Gastrocnemius medialis (tissue), 4 donors: ENCODE measurements at regions of chr17 and their contacts with region 1.

Region 1: GRCh38 chr17:2853111-2853721 is 57.0 kb downstream of the RAP1GAP2 start:
- DNase-seq: peak in 1 of 2 donors; percentile 24
- ATAC-seq: peak; percentile 40 to 52
- H3K4me3 ChIP-seq: peak overlapping the region; percentile 54 to 71 (median 60)
- H3K27ac ChIP-seq: peak overlapping the region in 3 of 4 donors; percentile 58 to 63 (median 59)
- H3K4me1 ChIP-seq: peaks cover 8 to 13% of the 10 kb centered on the region in 2 donors
- H3K27me3 ChIP-seq: peaks cover 11 to 36% (median 34%) of the 10 kb centered on the region in 3 donors
- CTCF ChIP-seq: no peak
- POLR2A ChIP-seq: no peak

Region 2: DNA sequence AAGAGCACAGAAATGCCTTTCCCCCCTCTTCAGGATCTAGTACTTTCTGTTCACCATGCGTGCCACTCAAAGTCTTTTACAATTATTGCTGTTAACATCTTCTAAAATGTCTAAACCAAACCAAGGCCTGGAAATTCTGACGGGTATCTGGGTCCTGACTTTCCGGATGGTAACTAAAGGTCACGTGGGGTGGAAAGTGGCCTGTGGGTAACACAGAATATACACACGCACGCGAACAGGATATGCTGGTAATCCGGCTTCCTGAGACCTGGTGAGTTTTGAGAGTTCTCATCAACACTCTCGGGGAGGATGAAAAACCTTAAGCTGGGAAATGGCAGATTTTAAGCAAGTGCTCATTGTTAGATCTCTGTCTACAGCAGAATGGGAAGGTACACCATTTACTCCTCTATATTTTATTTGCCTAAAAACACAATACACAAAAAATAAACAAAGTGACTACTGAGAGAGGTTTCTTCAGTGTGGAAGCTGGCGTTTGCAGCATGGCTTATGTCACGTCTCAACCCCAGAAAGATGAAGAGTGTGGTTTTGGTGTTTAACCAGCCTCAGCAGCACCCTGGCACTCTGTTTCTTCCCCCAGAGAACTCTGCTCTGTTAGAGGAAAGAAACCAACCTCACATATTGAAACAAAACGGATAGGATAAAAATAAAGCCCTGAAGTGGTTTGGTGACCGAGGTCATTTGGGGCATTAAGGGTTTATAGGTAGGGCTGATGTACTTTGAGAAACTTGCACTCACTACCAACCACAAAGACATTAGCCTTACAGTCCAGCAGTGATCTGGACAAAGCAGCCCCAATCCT is 587.0 kb before region 1 on chr17:
- in situ Hi-C with region 1: no loop called
- intact Hi-C with region 1: no loop called
- DNase-seq: no peak
- ATAC-seq: no peak
- H3K4me3 ChIP-seq: no peak overlapping the region
- H3K27ac ChIP-seq: no peak overlapping the region
- H3K4me1 ChIP-seq: peaks cover 10 to 22% of the 10 kb centered on the region in 2 donors
- H3K27me3 ChIP-seq: no peaks in the 10 kb centered on the region
- CTCF ChIP-seq: no peak
- POLR2A ChIP-seq: no peak

Region 3: DNA sequence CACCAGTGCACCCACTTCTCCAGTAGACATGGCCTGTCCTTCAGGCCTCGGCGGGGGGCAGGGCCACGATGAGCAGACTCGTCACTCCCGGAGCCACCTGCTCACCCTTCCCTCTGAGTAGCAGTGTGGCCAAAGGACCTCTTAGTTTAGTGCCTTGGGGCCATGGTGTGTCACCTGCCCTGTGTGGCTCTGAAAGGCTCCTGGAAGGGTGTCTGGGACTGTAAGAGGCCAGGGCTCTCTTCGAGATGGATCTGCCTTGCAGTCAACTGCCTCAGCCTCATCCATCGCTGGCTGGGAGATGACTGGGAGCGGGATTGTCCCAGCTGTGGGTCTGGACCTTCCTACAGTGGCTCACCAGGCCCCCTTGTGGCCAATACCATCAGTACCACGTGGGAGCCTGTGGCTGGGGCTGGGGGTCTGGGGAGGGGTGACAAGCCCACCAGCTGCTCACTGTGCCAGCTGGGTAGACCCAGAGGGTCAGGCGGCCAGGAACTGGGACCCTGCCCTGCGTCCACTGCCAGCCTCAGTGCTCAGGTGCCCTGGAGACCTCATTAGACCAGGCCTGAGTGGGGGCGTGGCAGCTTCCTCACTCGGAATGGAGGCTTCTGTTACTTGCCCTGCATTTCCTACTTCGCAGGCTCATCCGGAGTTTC is 76.8 kb after region 1 on chr17:
- in situ Hi-C with region 1: no loop called
- intact Hi-C with region 1: loop called (anchors 10 kb)
- DNase-seq: no peak
- ATAC-seq: no peak
- H3K4me3 ChIP-seq: no peak overlapping the region
- H3K27ac ChIP-seq: no peak overlapping the region
- H3K4me1 ChIP-seq: no peaks in the 10 kb centered on the region
- H3K27me3 ChIP-seq: no peaks in the 10 kb centered on the region
- CTCF ChIP-seq: peak in 4 of 5 experiments; percentile 14 to 45 (median 42)
- POLR2A ChIP-seq: no peak

Region 4: GRCh38 chr17:2965563-2966235 is 112.5 kb after region 1 on chr17:
- in situ Hi-C with region 1: no loop called
- intact Hi-C with region 1: no loop called
- DNase-seq: no peak
- ATAC-seq: no peak
- H3K4me3 ChIP-seq: no peak overlapping the region
- H3K27ac ChIP-seq: no peak overlapping the region
- H3K4me1 ChIP-seq: no peaks in the 10 kb centered on the region
- H3K27me3 ChIP-seq: no peaks in the 10 kb centered on the region
- CTCF ChIP-seq: no peak
- POLR2A ChIP-seq: no peak